Keratinocyte (primary cell): ENCODE measurements at regions of chrX and their contacts with region 1.

Region 1: DNA sequence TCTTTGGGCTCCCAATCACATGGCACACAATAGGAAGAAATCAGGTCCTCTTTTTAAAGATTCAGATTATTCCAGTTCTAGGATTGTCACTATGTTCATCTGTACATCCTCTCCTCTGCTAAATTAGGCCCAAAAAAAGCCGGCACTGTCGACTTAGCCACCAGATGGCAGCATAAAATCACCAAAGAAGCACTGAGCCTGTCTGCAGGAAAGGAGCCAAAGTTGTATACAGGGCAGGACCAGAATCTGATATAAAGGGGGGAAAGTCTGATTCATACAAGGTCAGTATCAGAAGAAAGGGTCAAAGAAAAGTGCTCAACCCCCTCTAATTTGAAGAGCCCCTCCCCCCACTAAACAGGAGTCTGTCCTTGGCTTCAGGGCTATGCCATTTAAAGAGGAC is 292.5 kb downstream of the CHIC1 start:
- DNase-seq: no peak
- H3K4me3 ChIP-seq: no peak overlapping the region
- H3K27ac ChIP-seq: no peak overlapping the region
- H3K4me1 ChIP-seq: no peaks in the 10 kb centered on the region
- H3K27me3 ChIP-seq: peaks cover under 1% of the 10 kb centered on the region
- CTCF ChIP-seq: peak; percentile 70 to 80 (median 74)

Region 2: DNA sequence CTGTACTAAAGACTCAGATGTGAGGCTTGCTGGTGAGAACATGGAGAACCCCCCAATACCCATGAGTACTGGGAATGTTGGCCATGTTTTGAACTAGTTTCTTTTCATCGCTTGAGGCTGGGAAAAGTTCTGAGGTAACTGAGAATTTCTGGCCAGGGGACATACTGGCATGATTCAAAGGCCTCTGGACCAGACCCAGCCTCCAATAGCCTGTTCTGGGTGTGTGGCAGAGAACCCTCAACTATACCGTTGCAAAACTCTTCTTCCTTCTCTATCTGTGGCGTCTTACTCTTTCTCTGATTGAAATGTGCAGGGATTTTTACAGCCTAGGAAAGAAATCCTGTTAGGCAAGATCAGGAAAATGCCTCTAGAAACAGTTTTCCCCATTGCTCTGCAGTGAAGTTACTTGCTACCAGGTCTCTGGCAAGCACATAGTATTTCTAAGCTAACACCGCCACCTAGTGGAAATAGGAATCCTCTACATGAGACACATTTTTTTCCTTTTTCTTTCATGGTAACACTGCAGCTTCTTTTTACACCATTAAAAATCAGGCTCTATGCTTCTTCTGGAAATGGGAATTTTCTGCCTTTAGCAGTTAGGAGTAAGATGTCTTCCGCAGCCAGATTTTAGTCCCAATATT is 277.7 kb after region 1 on chrX:
- dilution Hi-C with region 1: loop called (anchors 25 kb)
- DNase-seq: no peak
- H3K4me3 ChIP-seq: no peak overlapping the region
- H3K27ac ChIP-seq: no peak overlapping the region
- H3K4me1 ChIP-seq: no peaks in the 10 kb centered on the region
- H3K27me3 ChIP-seq: no peaks in the 10 kb centered on the region
- CTCF ChIP-seq: peak; percentile 47 to 74 (median 55)